BJ (cell line): ENCODE measurements at regions of chr12 and their contacts with region 1.

Region 1: DNA sequence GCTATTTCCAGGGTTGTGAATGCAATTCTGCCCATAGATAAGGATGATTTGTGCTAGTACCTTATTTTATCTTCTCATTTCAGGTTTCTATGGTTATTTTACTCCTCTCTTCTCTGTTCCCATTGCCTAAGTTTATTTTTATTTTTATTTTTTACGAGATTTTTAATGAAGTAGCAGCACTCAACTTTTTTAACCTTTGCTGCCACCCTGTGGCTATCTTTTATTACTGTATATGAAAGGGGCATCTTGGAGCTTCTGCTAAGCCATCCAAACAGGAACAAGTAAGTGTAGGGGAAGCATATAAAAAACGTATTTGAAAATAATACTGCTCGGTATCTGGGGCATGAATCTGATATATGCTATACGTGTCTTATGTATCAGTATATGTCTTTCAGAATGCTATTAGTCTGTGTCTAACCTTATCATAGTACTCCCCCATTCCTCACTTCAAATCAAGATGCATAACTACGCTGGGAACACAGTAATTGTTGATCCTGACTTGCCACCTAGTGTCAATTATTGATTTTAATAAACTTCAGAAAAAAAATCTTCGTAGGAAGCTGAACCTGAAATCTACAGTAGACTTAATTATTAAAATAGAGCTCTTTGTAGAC is 60.3 kb downstream of the KLRG1 start:
- DNase-seq: no peak
- H3K4me3 ChIP-seq: no peak overlapping the region
- H3K27me3 ChIP-seq: peaks cover 5% of the 10 kb centered on the region
- CTCF ChIP-seq: peak; percentile 53

Region 2: GRCh38 chr12:9039397-9039977 is 10.1 kb before region 1 on chr12:
- CTCF ChIA-PET with region 1: interaction called, 24 read pairs
- POLR2A ChIA-PET with region 1: no interaction called
- DNase-seq: no peak
- H3K4me3 ChIP-seq: no peak overlapping the region
- H3K27me3 ChIP-seq: no peaks in the 10 kb centered on the region
- CTCF ChIP-seq: peak; percentile 66

Region 3: GRCh38 chr12:9064201-9064814 is 14.7 kb after region 1 on chr12:
- CTCF ChIA-PET with region 1: interaction called, 12 read pairs
- POLR2A ChIA-PET with region 1: no interaction called
- DNase-seq: no peak
- H3K4me3 ChIP-seq: peak overlapping the region; percentile 73
- H3K27me3 ChIP-seq: no peaks in the 10 kb centered on the region
- CTCF ChIP-seq: peak; percentile 47

Region 4: DNA sequence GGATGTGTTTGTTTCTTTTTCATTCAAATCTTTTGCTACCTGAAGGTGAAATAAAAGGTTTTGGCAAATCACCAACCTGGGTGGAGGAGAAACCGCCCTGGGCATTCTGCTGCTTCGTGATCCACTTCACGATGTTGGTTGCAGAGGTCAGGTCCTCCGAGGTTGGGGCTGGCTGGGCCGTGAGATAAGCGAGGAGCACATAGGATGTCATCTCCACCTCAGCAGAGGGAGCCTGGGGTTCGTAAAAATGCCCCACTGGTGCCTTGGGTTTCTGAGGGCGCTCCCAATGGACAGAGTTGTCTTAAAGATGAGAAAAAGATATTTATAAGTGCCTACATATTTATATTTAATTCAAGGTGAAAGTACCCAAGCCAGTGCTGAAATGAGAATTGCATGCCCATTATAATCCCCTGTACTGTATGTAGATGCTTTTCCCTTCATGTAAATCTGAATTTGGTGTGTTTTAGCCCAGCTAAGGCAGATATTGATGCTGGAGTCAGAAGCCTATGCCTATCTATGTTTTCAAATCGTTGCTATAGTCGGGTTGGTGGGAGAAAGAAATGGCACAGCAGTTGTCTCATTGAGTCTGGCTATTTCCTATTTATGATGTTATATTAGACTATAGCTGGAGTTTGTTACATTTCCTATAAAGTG is 25.0 kb after region 1 on chr12:
- CTCF ChIA-PET with region 1: no interaction called
- POLR2A ChIA-PET with region 1: no interaction called
- DNase-seq: no peak
- H3K4me3 ChIP-seq: no peak overlapping the region
- H3K27me3 ChIP-seq: no peaks in the 10 kb centered on the region
- CTCF ChIP-seq: no peak

Region 5: DNA sequence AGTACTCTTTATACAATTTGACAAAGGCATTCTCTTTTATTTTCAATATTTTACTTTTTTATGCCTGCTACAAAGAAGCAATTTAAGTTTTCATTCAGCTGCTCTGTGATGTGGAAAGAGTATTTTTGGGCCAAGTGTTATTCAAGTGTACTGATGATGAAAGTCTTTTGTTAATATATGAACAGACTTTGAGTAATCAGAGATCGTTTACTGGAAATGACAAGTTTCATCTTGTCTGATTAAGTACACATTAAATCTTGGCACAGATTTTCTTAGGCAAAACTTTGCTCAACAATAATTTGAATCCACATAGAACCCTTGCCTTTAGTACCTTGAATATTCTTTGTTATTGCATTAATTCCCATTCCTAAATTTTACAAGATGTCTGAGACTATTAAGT is 171.9 kb after region 1 on chr12:
- CTCF ChIA-PET with region 1: no interaction called
- POLR2A ChIA-PET with region 1: no interaction called
- DNase-seq: no peak
- H3K4me3 ChIP-seq: no peak overlapping the region
- H3K27me3 ChIP-seq: no peaks in the 10 kb centered on the region
- CTCF ChIP-seq: no peak